Right ventricle myocardium inferior (tissue), 1 donor: ENCODE measurements at regions of chr4 and their contacts with region 1.

Region 1: DNA sequence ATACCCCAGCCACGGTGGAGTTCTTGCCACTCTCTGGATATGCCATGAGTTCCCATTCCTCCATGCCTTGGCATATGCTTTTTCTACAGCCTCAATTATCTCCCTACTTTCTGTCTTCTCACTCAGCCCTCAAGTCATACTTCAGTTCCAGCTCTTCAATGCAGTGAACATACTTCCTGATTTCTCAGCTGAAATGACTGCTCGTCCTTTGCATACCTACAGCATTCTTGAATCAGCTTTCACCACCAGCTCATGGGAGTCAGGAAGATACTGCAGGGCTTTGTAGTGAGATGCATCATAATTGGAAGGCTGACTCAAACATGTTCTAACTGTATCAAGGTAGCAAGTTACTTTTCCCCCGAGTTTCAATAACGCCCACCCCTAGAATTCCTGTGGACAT is 118.4 kb downstream of the APBB2 start:
- DNase-seq: no peak
- ATAC-seq: no peak

Region 2: GRCh38 chr4:41050866-41051775 is 44.9 kb before region 1 on chr4:
- intact Hi-C with region 1: loop called (anchors 5 kb)
- DNase-seq: no peak
- ATAC-seq: peak; percentile 49